H1 (cell line): ENCODE measurements at regions of chr15 and their contacts with region 1.

Region 1: GRCh38 chr15:93063262-93063671 is 25.7 kb downstream of the RGMA start:
- DNase-seq: no peak
- H3K4me3 ChIP-seq: no peak overlapping the region
- H3K27ac ChIP-seq: peak overlapping the region; percentile 69
- H3K4me1 ChIP-seq: peaks cover 23 to 63% (median 47%) of the 10 kb centered on the region in 4 experiments
- H3K27me3 ChIP-seq: no peaks in the 10 kb centered on the region
- CTCF ChIP-seq: no peak
- EP300 ChIP-seq: no peak
- POLR2A ChIP-seq: no peak
- RAD21 ChIP-seq: no peak

Region 2: GRCh38 chr15:93035953-93036800 is 27.1 kb before region 1 on chr15:
- CTCF ChIA-PET with region 1: interaction called, 119 read pairs
- POLR2A ChIA-PET with region 1: interaction called, 5 read pairs
- DNase-seq: peak in 1 of 2 experiments; percentile 67
- H3K4me3 ChIP-seq: no peak overlapping the region
- H3K27ac ChIP-seq: no peak overlapping the region
- H3K4me1 ChIP-seq: no peaks in the 10 kb centered on the region; a peak in 2 of 7 replicates
- H3K27me3 ChIP-seq: peaks cover 0 to 2% (median 0%) of the 10 kb centered on the region in 4 experiments; a peak in 1 of 7 replicates
- CTCF ChIP-seq: peak; percentile 48 to 78 (median 76)
- EP300 ChIP-seq: no peak
- POLR2A ChIP-seq: no peak
- RAD21 ChIP-seq: peak; percentile 66 to 76

Region 3: GRCh38 chr15:93048759-93049161 is 14.5 kb before region 1 on chr15:
- CTCF ChIA-PET with region 1: interaction called, 12 read pairs
- POLR2A ChIA-PET with region 1: interaction called, 6 read pairs
- DNase-seq: no peak
- H3K4me3 ChIP-seq: no peak overlapping the region
- H3K27ac ChIP-seq: no peak overlapping the region
- H3K4me1 ChIP-seq: no peaks in the 10 kb centered on the region; a peak in 1 of 7 replicates
- H3K27me3 ChIP-seq: no peaks in the 10 kb centered on the region
- CTCF ChIP-seq: no peak
- EP300 ChIP-seq: no peak
- POLR2A ChIP-seq: no peak
- RAD21 ChIP-seq: no peak

Region 4: DNA sequence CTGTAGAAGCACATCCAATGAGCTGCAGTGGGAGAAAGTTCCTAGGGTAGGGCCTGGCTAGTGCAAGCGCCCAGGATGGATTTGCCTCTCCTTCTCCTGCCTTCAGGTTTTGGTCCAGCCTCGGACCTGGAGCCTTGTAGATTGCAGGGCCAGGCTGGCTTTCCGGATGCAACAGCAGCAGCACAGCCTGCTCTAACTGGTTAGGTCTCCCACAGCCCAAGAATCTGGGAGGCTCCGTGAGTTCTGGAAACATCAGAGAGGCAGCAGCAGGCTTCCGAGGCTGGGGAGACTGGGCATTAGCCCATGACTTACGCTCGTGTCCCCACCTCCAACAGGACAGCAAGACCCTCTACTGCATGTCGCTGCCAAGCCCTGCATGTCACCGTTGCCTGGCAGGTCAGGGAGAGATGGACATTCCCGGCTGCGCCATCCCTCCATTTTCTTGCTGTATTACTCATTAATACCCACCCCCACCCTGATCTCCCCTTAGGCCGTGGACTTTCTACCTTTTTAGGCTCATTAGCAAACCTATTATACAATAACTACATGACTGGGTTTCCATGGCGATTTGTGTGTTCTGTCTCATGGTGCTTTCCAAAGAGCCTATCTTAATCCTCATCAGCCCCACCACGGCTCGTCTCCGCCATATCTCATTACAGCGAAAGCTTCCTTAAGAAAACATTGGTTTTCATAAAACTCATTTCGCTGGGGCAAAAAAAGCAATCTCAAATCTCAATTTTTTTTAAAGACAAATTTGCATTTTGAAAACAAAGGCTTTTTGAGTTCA is 66.6 kb after region 1 on chr15:
- CTCF ChIA-PET with region 1: no interaction called
- POLR2A ChIA-PET with region 1: no interaction called
- DNase-seq: no peak
- H3K4me3 ChIP-seq: no peak overlapping the region
- H3K27ac ChIP-seq: no peak overlapping the region
- H3K4me1 ChIP-seq: peaks cover 0 to 2% (median 0%) of the 10 kb centered on the region in 4 experiments; a peak in 2 of 7 replicates
- H3K27me3 ChIP-seq: peaks cover 0 to 5% (median 2%) of the 10 kb centered on the region in 4 experiments; a peak in 2 of 7 replicates
- CTCF ChIP-seq: no peak
- EP300 ChIP-seq: no peak
- POLR2A ChIP-seq: no peak
- RAD21 ChIP-seq: no peak